BJ (cell line): ENCODE measurements at regions of chr12 and their contacts with region 1.

Region 1: GRCh38 chr12:14769969-14770495 is 33.2 kb downstream of the WBP11 start:
- DNase-seq: no peak
- H3K4me3 ChIP-seq: peak overlapping the region; percentile 75
- H3K27me3 ChIP-seq: no peaks in the 10 kb centered on the region
- CTCF ChIP-seq: peak; percentile 86

Region 2: DNA sequence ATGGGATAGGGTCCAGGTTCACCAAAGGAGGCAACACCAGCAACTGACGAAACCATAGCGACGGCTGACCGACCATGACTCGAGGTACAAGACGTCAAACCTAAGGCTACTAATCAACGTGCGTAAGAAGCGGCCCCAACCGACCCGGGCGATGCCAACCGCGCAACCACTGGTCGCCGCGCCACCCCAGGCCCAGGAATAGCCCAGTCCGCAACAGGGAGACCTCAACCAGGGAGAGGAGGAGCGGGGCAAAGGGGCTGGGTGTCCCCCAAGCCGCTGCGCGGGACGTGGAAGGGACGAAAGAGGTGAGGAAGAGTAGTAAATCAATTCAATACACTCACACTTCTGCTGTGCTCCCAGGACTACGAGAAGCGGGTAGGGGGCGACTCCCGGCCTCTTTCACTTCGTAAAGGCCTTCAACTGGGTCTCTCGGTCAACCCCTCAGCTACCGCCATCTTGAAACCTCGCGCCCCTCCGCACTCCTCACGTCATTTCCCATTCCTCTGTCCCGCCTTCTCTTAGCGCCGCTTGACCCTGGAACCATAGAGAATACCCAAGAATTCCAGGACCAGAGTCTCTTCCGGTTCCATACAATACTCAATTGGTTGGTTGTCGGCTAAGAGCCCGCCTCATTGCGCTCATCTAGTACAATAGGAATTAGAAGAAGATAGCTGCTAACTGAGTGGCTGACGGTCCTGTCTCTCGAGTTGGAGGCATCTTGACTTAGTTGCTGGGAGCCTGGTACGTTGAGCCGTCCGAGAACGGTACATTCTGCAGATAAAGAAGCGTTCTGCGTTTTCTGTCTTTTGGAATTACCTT is 33.2 kb after region 1 on chr12 and contains the starts of genes C12orf60 and WBP11:
- CTCF ChIA-PET with region 1: interaction called, 15 read pairs
- POLR2A ChIA-PET with region 1: interaction called, 10 read pairs
- DNase-seq: peak; percentile 99
- H3K4me3 ChIP-seq: peak within 1 kb of the TSS; percentile 100
- H3K27me3 ChIP-seq: no peaks in the 10 kb centered on the region
- CTCF ChIP-seq: no peak
- polyA plus RNA-seq, gene C12orf60: 0.71 and 1.3 TPM in 2 replicates
- polyA plus RNA-seq, gene WBP11: 12.3 and 12.8 TPM in 2 replicates

Region 3: DNA sequence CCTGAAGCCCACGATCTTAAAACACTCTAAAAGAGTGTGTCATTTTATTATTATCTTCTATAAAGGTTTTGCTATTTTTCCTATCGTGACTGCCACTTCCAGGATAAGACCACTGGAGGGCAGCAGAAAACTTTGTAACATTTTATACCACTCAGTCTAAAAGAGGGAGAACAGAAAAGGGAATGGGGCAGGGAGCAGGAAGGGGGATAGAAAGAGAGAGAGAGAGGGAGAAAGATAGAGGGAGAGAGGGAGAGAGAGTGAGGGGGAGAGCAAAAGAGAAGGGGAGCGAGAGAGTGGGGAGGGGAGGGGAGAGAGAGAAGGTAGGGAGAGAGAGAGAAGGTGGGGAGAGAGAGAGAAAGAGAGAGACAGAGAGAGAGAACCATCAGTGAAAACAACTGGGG is 75.3 kb after region 1 on chr12:
- CTCF ChIA-PET with region 1: no interaction called
- POLR2A ChIA-PET with region 1: no interaction called
- DNase-seq: no peak
- H3K4me3 ChIP-seq: no peak overlapping the region
- H3K27me3 ChIP-seq: no peaks in the 10 kb centered on the region
- CTCF ChIP-seq: peak; percentile 77